ENCODE measurements at regions of chr6 and their contacts with region 1.

Region 1: DNA sequence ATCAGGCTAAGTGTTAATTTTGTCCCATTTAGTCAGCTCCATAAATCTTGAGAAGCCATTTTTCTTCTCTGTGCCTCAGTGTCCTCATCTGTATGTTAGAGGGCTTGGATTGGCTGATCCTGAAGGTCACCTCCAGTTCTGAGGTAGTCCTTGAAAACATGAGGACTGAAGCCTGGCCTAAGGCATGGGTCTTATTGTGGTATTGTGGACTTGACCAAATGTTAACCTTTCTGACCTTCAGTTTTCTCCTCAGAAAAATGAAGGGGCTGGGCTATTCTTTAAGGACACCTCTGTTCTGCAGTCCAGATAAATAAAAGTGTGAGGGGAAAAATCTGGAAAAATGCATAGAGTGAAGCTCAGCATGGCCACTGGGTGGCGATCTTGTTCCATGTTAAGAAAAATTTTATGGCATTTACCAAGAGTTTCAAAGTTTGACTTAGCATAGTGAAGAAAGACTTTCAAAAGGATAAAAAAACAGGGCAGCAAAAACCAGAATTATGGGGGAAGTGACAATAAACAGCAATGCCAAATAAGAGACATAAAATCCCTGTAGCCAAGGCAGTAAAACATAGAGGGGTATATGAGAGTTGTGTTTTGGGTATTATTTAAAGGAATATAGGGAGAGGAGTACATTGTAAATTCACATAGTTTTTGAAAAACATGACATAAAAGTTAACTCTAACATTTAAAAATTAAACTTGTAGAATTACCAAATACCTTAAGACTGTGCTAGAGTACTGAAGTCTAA is 13.2 kb upstream of the TFB1M start:
- DNase-seq: peak; percentile 88
- H3K4me3 Mint-ChIP-seq: no peak overlapping the region
- H3K27ac Mint-ChIP-seq: peak overlapping the region; percentile 48
- H3K4me1 Mint-ChIP-seq: peaks cover 23% of the 10 kb centered on the region
- H3K27me3 Mint-ChIP-seq: no peaks in the 10 kb centered on the region

Region 2: GRCh38 chr6:155310596-155310995 is 16.9 kb before region 1 on chr6:
- intact Hi-C with region 1: no loop called
- DNase-seq: no peak
- H3K4me3 Mint-ChIP-seq: no peak overlapping the region
- H3K27ac Mint-ChIP-seq: no peak overlapping the region
- H3K4me1 Mint-ChIP-seq: peaks cover 31% of the 10 kb centered on the region
- H3K27me3 Mint-ChIP-seq: no peaks in the 10 kb centered on the region

Region 3: DNA sequence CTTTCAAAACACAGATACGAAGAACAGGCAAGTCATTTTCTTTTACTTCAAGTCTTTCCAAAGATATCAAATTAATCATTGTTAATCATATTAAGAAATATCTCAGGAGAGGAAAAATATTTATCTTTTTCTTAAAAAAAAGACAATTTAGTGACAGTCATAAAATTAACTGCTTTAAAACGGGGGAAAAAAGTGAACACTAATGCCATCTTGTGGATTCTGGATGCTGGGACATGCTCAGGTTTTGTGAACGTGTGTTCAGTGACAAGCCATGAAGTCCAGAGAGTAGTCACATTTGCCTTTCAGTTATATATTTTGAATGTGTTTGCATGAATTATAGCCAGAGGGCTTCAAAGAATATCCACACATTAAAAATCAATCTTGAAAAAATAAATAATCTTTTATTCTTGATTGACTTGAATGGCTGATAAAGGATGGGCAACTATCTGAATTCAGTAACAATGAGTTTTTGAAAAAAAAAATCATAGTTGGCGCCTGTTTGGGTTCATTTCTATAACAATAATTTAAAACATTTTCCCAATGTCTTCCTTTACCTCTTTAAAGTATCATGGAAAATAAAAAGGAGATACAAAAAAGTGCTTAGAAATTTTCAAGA is 202.8 kb after region 1 on chr6:
- intact Hi-C with region 1: loop called (anchors 1 kb)
- DNase-seq: peak; percentile 71
- H3K4me3 Mint-ChIP-seq: no peak overlapping the region
- H3K27ac Mint-ChIP-seq: no peak overlapping the region
- H3K4me1 Mint-ChIP-seq: peaks cover 10% of the 10 kb centered on the region
- H3K27me3 Mint-ChIP-seq: peaks cover 2% of the 10 kb centered on the region

Region 4: DNA sequence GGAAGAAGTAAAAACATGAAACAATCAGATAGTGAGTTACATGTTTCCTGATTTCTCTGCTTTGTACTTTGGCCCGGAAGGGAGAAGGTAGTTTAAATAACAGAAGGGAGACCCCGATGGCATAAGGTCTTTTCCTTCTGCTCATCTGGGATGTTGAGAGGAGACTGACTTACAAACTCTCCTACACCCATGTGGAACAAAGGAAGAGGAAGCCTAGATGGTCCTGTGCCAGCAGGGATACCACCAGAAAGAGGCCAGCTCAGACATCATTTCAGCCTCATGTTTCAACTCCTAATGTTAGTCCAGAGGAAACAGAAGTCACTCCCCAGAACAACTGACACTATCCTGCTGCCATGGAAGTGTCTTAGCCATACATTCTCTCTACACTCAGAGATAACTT is 378.8 kb after region 1 on chr6:
- intact Hi-C with region 1: loop called (anchors 5 kb)
- DNase-seq: no peak
- H3K4me3 Mint-ChIP-seq: no peak overlapping the region
- H3K27ac Mint-ChIP-seq: no peak overlapping the region
- H3K4me1 Mint-ChIP-seq: no peaks in the 10 kb centered on the region
- H3K27me3 Mint-ChIP-seq: no peaks in the 10 kb centered on the region

Region 5: GRCh38 chr6:156564127-156564806 is 1236.8 kb after region 1 on chr6:
- intact Hi-C with region 1: loop called (anchors 10 kb)
- DNase-seq: peak; percentile 92
- H3K4me3 Mint-ChIP-seq: no peak overlapping the region
- H3K27ac Mint-ChIP-seq: no peak overlapping the region
- H3K4me1 Mint-ChIP-seq: peaks cover 2% of the 10 kb centered on the region
- H3K27me3 Mint-ChIP-seq: peaks cover 13% of the 10 kb centered on the region

Measured in activated CD4-positive, alpha-beta T cell treated with anti-CD3 and anti-CD28 coated beads, Interleukin-2, amount 10 ng/mL, durations not matched to agents 24 days and 14 days (primary cell).